AG04450 (cell line): ENCODE measurements at regions of chr2 and their contacts with region 1.

Region 1: DNA sequence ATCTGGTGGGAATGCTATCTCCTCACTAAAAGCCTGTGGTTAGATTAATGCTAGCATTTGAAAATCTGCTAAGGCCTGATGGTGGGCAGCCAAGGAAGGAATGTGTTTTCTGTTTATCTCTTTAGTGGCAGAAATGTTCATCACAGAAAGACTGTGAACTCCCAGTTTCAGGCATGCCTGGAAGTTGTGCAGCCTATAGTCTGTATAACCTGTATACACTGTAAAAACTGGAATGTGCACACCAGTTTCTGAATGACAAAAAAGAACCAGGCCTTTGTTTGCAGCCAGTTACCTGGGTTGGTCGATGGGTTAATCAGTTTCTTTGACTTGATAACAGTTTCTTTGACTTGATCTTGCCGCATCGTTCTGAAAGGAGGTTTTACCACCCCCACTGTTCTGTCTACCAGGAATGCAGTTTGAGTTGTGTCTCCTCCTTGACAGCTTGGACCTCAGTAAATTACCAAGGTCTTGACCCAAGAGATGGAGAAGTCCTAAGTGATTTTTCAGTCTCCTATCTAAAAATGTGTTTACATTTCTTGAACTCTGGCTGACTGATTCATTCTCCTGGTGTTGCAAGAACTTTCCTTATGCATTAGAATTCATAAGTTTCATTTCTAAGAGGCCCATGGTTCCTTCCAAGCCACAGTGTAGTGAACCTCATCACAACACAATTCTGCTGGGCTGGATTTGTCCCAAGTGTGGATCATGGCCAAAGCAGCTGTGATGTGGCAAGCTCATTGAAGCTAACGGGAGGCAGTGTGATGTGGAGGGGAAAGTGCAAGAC is 62.2 kb downstream of the KIAA2012 start:
- DNase-seq: peak; percentile 98
- H3K4me3 ChIP-seq: peak overlapping the region; percentile 23; the same call in 1 of the 2 replicates
- H3K27ac ChIP-seq: peak overlapping the region; percentile 86
- H3K27me3 ChIP-seq: no peaks in the 10 kb centered on the region
- CTCF ChIP-seq: peak; percentile 36

Region 2: DNA sequence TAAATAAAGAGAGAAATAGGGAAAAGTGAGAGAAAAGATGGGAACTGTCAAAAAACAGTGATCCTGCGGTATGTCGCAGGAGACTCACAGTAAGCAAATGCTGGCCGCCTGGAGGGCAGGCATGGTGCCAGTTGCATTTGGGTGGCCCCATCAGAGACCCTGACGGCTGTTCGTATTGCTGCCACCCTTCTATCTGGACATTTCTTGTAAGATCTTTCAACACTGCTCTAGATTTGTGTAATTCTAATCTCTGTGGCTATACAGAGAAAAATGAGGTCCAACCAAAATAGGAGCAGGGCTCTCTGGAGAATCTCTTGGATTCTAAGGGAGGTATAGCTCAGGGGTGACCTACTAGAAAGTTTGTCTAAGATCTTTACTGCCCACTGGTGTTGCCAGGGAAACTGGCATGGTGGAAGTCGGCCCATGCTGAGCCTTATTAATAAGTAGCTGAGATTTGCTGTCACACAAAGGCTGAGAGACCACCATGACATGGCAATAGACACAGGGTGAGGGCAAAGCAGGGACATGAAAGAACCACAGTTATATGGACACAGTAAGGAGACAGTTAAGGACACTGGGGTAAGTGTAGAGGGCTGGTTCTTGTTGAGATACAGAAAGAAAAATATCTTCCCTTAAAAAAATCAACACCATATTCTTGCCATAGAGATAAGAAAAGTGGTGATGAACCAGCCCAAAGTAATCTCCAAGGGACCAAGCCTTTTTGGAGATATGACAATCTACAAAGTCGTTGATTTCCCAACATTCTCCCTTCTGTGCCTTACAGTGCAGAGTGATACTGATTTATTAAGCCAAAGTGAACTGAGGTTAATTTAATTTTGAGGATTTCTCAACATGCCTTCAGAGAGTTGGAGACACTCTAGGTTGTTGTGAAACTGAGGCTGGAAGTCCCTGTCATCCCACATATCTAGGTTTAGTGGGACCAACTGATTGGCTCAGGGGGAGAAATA is 128.0 kb before region 1 on chr2:
- CTCF ChIA-PET with region 1: no interaction called
- POLR2A ChIA-PET with region 1: no interaction called
- DNase-seq: no peak
- H3K4me3 ChIP-seq: no peak overlapping the region
- H3K27ac ChIP-seq: no peak overlapping the region
- H3K27me3 ChIP-seq: no peaks in the 10 kb centered on the region
- CTCF ChIP-seq: peak; percentile 26

Region 3: DNA sequence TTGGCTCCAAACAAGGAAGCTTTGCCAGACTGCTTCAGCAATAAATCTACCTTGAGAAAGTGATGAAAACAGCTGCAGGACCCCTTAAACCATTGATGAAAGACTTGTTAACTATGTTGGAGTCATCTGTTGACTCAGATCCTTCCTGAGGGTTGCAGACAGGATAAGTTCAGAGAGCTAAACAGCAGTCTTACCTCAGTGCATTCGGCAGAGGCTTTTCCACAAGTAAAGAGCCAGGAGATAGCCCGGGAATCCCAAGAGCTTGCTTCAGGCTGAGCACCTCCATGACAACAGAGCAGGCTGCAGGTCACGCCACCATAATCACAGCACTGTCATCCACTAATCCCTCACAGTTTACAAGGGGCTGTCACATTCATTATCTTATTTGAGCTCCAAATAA is 38.5 kb before region 1 on chr2:
- CTCF ChIA-PET with region 1: no interaction called
- POLR2A ChIA-PET with region 1: no interaction called
- DNase-seq: peak; percentile 51
- H3K4me3 ChIP-seq: no peak overlapping the region
- H3K27ac ChIP-seq: peak overlapping the region; percentile 4
- H3K27me3 ChIP-seq: no peaks in the 10 kb centered on the region
- CTCF ChIP-seq: no peak

Region 4: DNA sequence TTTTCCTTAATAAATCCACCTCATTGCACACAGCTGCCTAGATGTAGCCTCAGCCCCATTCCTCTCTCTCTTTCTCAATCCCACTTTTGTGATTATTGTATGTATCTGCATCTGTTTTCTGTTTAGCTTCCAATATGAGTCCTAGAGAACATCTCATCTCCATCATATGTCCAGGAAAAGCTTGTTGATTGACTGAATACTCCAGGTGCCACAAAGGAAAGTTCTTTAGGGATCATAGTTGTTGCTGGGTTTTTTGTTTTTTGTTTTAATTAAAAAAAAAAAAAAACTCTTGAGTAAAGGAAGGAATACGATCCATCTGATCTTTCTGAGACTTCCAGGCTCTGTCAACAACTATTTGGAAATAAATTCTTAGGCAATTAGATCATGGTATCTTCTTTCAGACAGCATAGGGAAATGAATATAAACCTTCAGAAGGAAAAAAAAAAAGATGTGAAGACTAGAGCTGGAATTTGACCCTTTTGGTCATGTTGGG is 19.8 kb before region 1 on chr2:
- CTCF ChIA-PET with region 1: no interaction called
- POLR2A ChIA-PET with region 1: interaction called, 15 read pairs
- DNase-seq: peak; percentile 65
- H3K4me3 ChIP-seq: no peak overlapping the region
- H3K27ac ChIP-seq: peak overlapping the region; percentile 42
- H3K27me3 ChIP-seq: no peaks in the 10 kb centered on the region
- CTCF ChIP-seq: no peak

Region 5: GRCh38 chr2:202149155-202149762 is 14.0 kb after region 1 on chr2:
- CTCF ChIA-PET with region 1: no interaction called
- POLR2A ChIA-PET with region 1: interaction called, 10 read pairs
- DNase-seq: no peak
- H3K4me3 ChIP-seq: no peak overlapping the region
- H3K27ac ChIP-seq: peak overlapping the region; percentile 42
- H3K27me3 ChIP-seq: no peaks in the 10 kb centered on the region
- CTCF ChIP-seq: no peak

Region 6: GRCh38 chr2:202327858-202328257 is 192.6 kb after region 1 on chr2:
- CTCF ChIA-PET with region 1: no interaction called
- POLR2A ChIA-PET with region 1: no interaction called
- DNase-seq: no peak
- H3K4me3 ChIP-seq: no peak overlapping the region
- H3K27ac ChIP-seq: no peak overlapping the region
- H3K27me3 ChIP-seq: no peaks in the 10 kb centered on the region
- CTCF ChIP-seq: no peak